Tibial artery (tissue), 4 donors: ENCODE measurements at regions of chr5 and their contacts with region 1.

Region 1: DNA sequence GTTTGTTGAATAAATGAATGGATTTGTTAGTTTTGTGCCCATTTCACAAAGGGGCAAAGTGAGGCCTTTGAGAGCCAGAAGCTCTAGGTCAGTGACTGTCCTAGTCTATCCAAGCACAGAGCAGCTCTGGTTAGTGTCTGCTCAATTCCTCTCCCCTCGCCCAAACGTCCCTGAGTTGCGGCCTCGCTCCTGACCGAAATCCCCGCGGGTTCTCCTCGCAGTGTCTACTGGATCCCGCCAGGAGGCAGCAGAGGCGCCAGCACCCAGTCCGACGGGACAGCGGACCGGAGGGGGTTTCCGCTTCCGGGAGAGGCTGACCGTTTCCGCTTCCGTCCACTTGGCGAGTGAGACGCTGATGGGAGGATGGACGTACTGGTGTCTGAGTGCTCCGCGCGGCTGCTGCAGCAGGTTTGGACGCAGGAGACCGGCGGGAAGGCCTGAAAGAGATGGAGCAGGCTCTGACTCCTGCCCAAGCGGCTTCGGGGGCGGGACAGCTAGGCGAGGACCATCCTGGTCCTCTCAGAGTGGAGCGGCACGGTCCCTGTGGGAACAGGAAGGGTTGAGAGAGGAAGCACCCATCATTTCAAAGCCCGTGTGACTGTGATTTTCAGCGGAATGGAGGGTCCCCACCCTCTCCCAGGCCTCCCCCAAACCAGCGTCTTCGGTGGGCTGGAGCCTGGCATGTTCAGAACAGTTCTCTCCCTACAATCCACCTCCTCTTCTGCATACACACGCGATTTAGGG is at the start of gene RARS1:
- DNase-seq: peak; percentile 89 to 95
- H3K4me3 ChIP-seq: peak within 1 kb of the TSS; percentile 86 to 87
- H3K27ac ChIP-seq: peak within 1 kb of the TSS; percentile 80 to 85
- H3K4me1 ChIP-seq: peaks cover 0 to 13% (median 9%) of the 10 kb centered on the region in 4 donors
- H3K27me3 ChIP-seq: no peaks in the 10 kb centered on the region
- CTCF ChIP-seq: peak; percentile 90 to 97

Region 2: DNA sequence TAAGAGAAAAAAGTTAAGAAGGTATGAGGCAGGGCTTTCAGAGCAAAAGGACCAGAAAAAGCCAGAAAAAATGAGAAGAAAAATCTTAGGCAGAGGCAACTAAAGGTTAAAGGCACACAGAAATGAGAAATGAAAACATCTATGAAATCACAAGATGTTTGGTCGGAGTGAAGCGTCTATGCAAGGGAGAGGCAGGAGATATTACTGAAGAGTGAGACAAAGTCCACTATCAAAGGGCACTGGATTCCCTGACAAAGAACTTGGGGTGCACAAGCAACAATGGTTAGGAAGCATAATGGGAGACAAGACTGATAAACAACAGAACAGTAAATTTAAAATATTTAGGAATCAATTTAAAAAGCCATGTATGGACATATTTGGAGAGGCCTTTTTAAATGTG is 76.0 kb after region 1 on chr5:
- intact Hi-C with region 1: loop called (anchors 10 kb)
- DNase-seq: no peak
- H3K4me3 ChIP-seq: no peak overlapping the region
- H3K27ac ChIP-seq: no peak overlapping the region
- H3K4me1 ChIP-seq: peaks cover 0 to 7% (median 1%) of the 10 kb centered on the region in 4 donors
- H3K27me3 ChIP-seq: no peaks in the 10 kb centered on the region
- CTCF ChIP-seq: no peak

Region 3: GRCh38 chr5:168706655-168707069 is 220.4 kb after region 1 on chr5:
- intact Hi-C with region 1: no loop called
- DNase-seq: peak in 1 of 2 donors; percentile 72
- H3K4me3 ChIP-seq: no peak overlapping the region
- H3K27ac ChIP-seq: no peak overlapping the region
- H3K4me1 ChIP-seq: no peaks in the 10 kb centered on the region
- H3K27me3 ChIP-seq: no peaks in the 10 kb centered on the region
- CTCF ChIP-seq: peak; percentile 42 to 55

Region 4: GRCh38 chr5:169583424-169584204 is 1097.3 kb after region 1 on chr5 and contains the start of gene SPDL1:
- intact Hi-C with region 1: loop called (anchors 10 kb)
- DNase-seq: peak; percentile 93 to 97
- H3K4me3 ChIP-seq: peak within 1 kb of the TSS; percentile 65 to 93
- H3K27ac ChIP-seq: peak within 1 kb of the TSS; percentile 68 to 73
- H3K4me1 ChIP-seq: peaks cover 0 to 9% (median 8%) of the 10 kb centered on the region in 4 donors
- H3K27me3 ChIP-seq: no peaks in the 10 kb centered on the region
- CTCF ChIP-seq: no peak